K562 (cell line): ENCODE measurements at regions of chr1 and their contacts with region 1.

Region 1: GRCh38 chr1:208069908-208070307 is 159.0 kb upstream of the CD34 start:
- DNase-seq: no peak
- ATAC-seq: no peak; the same call in 2 of the 3 replicates
- H3K4me3 ChIP-seq: no peak overlapping the region
- H3K27ac ChIP-seq: no peak overlapping the region
- H3K4me1 ChIP-seq: no peaks in the 10 kb centered on the region
- H3K27me3 ChIP-seq: peaks cover 27 to 60% of the 10 kb centered on the region in 2 experiments
- CTCF ChIP-seq: no peak
- EP300 ChIP-seq: no peak
- POLR2A ChIP-seq: no peak
- RAD21 ChIP-seq: no peak

Region 2: GRCh38 chr1:208057056-208057455 is 12.9 kb before region 1 on chr1:
- CTCF ChIA-PET with region 1: no interaction called
- POLR2A ChIA-PET with region 1: interaction called, 11 read pairs
- in situ Hi-C with region 1: no loop called
- intact Hi-C with region 1: no loop called
- DNase-seq: no peak
- ATAC-seq: no peak
- H3K4me3 ChIP-seq: no peak overlapping the region
- H3K27ac ChIP-seq: no peak overlapping the region
- H3K4me1 ChIP-seq: no peaks in the 10 kb centered on the region
- H3K27me3 ChIP-seq: peaks cover 34 to 80% of the 10 kb centered on the region in 2 experiments
- CTCF ChIP-seq: no peak
- EP300 ChIP-seq: no peak
- POLR2A ChIP-seq: no peak
- RAD21 ChIP-seq: no peak

Region 3: DNA sequence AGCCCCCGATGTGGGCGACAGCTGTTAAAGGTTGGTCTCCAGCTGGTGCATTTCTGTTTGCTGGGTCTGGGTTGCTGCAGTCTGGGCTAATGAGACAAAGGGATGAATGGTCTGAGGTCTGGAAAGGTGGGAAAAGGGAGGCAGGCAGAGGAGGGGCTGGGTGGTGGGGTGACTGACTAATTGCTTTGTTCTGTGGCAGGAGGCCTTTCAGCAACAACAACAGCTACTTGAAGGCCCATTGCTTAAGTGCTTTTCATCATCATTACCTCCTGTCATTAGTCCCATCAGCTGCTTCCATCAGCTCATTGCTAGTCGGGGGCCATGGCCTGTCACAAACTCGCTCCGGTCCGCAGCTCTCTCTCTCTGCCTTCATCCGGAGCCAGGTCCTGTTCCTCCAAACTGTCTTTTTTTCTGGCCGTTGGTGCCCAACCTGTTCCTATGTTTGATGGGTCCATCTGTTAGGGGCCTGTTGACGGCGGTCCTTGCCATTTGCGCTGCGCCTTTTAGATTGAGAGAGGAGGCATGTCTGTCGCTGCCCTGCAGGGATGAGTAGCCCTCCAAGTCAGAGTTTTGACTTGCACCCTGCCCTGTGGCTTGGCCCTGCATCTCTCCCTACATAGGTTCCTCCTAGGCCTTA is 279.9 kb after region 1 on chr1:
- CTCF ChIA-PET with region 1: no interaction called
- POLR2A ChIA-PET with region 1: no interaction called
- in situ Hi-C with region 1: no loop called
- intact Hi-C with region 1: no loop called
- DNase-seq: no peak
- ATAC-seq: no peak
- H3K4me3 ChIP-seq: no peak overlapping the region
- H3K27ac ChIP-seq: no peak overlapping the region
- H3K4me1 ChIP-seq: peaks cover 0 to 4% of the 10 kb centered on the region in 2 experiments; a peak in 1 of 5 replicates
- H3K27me3 ChIP-seq: peaks cover 0 to 9% of the 10 kb centered on the region in 2 experiments; a peak in 3 of 5 replicates
- CTCF ChIP-seq: no peak
- EP300 ChIP-seq: no peak
- POLR2A ChIP-seq: no peak
- RAD21 ChIP-seq: no peak